ENCODE measurements at regions of chr14 and their contacts with region 1.

Region 1: DNA sequence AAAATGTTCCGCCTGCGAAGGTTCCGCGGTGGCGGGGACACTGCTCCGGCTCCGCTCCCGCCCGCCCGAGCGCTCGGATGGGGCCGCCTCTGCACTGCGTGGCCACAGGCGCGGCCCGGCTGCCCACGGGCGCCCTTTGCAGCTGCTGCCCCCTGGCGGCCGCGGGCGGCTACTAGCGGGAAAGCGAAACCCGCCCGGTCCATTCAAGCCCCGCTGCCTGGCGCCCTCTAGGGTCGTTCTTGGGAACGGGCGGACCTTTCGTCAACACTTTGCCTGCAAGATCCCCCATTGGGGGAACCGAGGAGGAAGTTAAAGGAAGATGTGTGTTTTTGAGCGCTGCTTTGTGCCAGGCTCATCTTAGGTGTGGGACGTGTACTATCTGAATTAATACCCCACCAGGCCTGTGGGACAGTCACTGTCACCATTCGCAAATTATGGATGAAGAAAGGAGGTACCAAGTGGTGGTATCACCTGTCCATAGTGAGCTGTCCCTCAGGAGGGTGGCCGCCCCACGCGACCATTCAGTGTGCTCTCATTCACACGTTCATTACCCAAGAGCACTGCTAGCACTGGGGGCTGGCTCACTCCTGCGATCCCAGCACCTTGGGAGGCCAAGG is 19.4 kb downstream of the GPR132 start:
- DNase-seq: peak; percentile 75 to 95
- ATAC-seq: peak; percentile 90

Region 2: DNA sequence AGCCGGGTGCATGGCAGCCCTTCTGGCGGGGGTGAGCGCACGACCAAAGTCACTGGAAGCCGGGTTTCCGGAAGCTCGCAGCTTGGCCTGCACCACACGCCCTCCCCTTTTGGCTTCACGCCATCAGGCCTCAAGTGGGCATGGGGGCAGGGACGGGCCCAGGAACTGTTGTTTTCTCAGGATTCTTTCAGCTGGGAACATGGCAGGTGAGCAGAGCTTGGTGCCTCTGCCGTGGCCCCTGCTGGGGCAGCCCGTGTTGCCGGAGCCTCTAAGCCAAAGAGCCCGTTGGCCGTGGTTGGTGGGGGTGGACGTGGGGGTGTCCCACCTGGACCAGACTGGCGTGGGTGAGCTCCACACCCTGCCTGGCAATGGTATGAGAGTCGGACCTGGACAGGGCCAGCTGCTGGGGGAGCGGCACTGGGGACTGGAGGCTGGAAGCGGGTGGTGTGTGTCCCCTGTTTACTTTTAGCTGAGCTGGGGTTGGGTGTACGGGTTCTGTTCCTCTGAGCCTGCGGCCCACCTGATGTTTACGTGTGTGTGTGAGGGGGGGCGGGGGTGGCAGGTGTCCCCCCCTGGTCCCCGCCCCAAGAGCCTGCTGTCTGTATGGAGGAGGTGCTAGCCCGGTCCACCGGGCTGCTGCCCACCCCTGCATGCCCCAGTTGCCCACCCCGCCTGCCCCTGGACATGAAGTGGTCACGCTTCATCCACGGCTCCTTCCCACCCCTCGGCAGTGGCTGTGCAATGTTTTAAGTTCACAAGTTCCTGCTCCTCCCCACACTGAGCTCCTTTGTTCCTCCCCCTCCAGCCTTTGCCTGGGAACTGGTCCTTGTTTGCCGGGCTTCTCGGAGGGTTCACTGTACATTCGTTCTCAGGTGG is 149.8 kb before region 1 on chr14:
- intact Hi-C with region 1: loop called in 1 of 2 experiments (anchors 10 kb)
- DNase-seq: peak in 1 of 2 donors; percentile 23
- ATAC-seq: peak; percentile 5

Region 3: GRCh38 chr14:104926619-104927431 is 119.0 kb before region 1 on chr14:
- intact Hi-C with region 1: no loop called
- DNase-seq: peak in 1 of 2 donors; percentile 28
- ATAC-seq: peak; percentile 11

Region 4: GRCh38 chr14:104976198-104977007 is 69.4 kb before region 1 on chr14:
- intact Hi-C with region 1: loop called (anchors 2 to 5 kb)
- DNase-seq: peak; percentile 87 to 90
- ATAC-seq: peak; percentile 55

Measured in left colon (tissue), 2 donors.